ENCODE measurements at regions of chr1 and their contacts with region 1.

Region 1: DNA sequence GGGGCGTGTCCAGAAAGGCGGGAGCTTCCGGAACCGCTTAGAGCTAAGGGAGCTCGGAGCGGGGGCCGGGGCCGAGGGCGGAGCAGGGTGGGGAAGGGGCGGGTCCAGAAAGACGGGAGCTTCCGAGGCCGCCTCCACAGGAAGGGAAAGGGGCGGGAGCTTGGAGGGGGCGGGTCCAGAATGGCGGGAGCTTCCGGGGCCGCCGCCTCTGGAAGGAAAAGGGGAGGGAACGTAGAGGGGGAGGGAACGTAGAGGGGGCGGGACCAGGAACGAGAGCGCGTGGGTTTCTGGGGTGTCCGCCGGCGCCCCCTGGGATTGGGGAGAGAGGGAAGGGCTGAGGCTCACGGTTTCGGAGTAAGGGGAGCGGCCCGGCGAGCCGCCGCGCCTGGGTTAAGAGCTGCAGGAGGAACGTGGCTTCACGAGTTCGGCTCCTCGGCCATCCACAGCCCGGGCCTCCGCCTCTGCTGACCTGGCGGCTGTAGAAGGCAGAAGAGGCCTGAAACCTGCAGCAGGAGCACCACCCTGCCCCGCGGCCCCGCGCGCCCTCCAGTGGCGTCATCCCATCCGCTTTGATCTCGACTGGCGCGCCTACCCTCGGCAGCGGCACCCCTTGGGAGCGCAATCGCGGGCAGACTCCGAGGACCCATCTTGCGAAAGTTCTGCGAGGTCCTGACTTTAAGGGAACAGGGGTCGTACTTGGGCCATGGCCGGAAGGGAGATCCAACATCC is 22.9 kb upstream of the HPDL start:
- DNase-seq: peak; percentile 98 to 99 (median 99)
- H3K4me3 ChIP-seq: peak overlapping the region in 3 of 4 donors; percentile 47 to 78 (median 60)
- H3K27ac ChIP-seq: peak overlapping the region; percentile 59 to 94 (median 75)
- H3K4me1 ChIP-seq: peaks cover 9 to 13% of the 10 kb centered on the region in 2 donors
- H3K27me3 ChIP-seq: no peaks in the 10 kb centered on the region
- CTCF ChIP-seq: peak; percentile 42 to 81 (median 78)
- POLR2A ChIP-seq: peak; percentile 52 to 64

Region 2: GRCh38 chr1:45011837-45012638 is 291.7 kb before region 1 on chr1 and contains the start of gene UROD:
- intact Hi-C with region 1: loop called (anchors 2 to 5 kb)
- DNase-seq: peak; percentile 91 to 97 (median 95)
- H3K4me3 ChIP-seq: peak within 1 kb of the TSS; percentile 36 to 88 (median 75)
- H3K27ac ChIP-seq: peak within 1 kb of the TSS; percentile 83 to 94 (median 92)
- H3K4me1 ChIP-seq: peaks cover 38 to 49% of the 10 kb centered on the region in 2 donors
- H3K27me3 ChIP-seq: no peaks in the 10 kb centered on the region
- CTCF ChIP-seq: no peak
- POLR2A ChIP-seq: peak; percentile 23 to 79
- total RNA-seq, gene UROD: 169 to 324 (median 220) TPM

Region 3: GRCh38 chr1:45018599-45019230 is 285.0 kb before region 1 on chr1:
- intact Hi-C with region 1: loop called (anchors 2 to 5 kb)
- DNase-seq: peak; percentile 56 to 91 (median 73)
- H3K4me3 ChIP-seq: no peak overlapping the region
- H3K27ac ChIP-seq: peak overlapping the region in 1 of 5 donors; percentile 14
- H3K4me1 ChIP-seq: peaks cover 5 to 16% of the 10 kb centered on the region in 2 donors
- H3K27me3 ChIP-seq: no peaks in the 10 kb centered on the region
- CTCF ChIP-seq: peak; percentile 52 to 87 (median 75)
- POLR2A ChIP-seq: no peak

Region 4: GRCh38 chr1:45205910-45206721 is 97.6 kb before region 1 on chr1 and contains the start of gene ZSWIM5:
- intact Hi-C with region 1: loop called in 1 of 2 experiments (anchors 5 kb)
- DNase-seq: peak; percentile 70 to 82 (median 74)
- H3K4me3 ChIP-seq: peak within 1 kb of the TSS; percentile 75 to 98 (median 90)
- H3K27ac ChIP-seq: peak within 1 kb of the TSS; percentile 72 to 95 (median 83)
- H3K4me1 ChIP-seq: peaks cover 0 to 29% of the 10 kb centered on the region in 2 donors
- H3K27me3 ChIP-seq: no peaks in the 10 kb centered on the region
- CTCF ChIP-seq: no peak
- POLR2A ChIP-seq: peak; percentile 70 to 84
- total RNA-seq, gene ZSWIM5: 13.3 to 34.0 (median 20.1) TPM